GM12878 (cell line): ENCODE measurements at regions of chr2 and their contacts with region 1.

Region 1: DNA sequence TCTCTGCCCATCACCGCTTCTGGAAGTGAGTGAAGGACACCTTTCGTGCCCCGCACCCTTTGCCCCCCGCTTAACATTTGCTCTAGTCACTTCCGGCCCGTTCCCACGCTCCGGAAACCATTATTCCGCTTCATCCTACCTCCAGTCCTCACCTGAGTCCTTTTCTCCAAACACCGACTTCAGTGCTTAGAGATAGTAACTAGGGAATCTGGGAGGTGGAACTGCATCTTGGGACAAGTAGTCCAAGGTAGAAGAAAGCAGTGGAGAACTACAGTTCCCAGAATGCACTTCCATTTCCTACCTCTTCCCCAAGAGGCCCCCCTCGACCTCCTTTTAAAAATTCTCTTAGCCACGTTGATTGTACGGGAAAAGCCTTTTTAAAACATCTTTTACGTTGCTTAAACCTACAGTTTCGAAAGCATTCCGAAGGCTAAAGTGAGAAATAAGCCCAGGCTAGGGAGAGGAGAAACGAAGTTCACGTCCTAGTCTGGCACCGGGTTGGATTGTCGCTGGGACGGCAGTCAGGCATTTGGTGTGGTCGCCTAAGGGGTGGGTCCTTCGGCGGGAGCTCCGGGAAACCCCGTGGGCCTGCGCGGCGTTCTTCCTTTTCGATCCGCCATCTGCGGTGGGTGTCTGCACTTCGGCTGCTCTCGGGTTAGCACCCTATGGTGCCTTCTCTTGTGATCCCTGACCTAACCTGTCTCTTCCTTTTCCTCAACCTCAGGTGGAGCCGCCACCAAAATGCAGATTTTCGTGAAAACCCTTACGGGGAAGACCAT is at the starts of genes CLHC1 and RPS27A:
- DNase-seq: peak; percentile 85
- ATAC-seq: peak; percentile 85
- H3K4me3 ChIP-seq: peak within 1 kb of the TSS; percentile 93
- H3K27ac ChIP-seq: peak within 1 kb of the TSS; percentile 98
- H3K4me1 ChIP-seq: peaks cover 3% of the 10 kb centered on the region; the same call in 1 of the 2 replicates
- H3K27me3 ChIP-seq: no peaks in the 10 kb centered on the region
- CTCF ChIP-seq: no peak
- EP300 ChIP-seq: 0 out of 4 replicates have a peak, but pooled peaks of 1 of the 2 experiments have one; percentile 19
- POLR2A ChIP-seq: peak; percentile 98
- RAD21 ChIP-seq: no peak
- polyA plus RNA-seq, gene CLHC1: 2.6 to 3.2 TPM
- polyA plus RNA-seq, gene RPS27A: 3,416 to 4,705 TPM

Region 2: GRCh38 chr2:55282110-55282917 is 50.0 kb after region 1 on chr2:
- CTCF ChIA-PET with region 1: no interaction called
- POLR2A ChIA-PET with region 1: no interaction called
- RAD21 ChIA-PET with region 1: no interaction called
- SMC1A ChIA-PET with region 1: no interaction called
- in situ Hi-C with region 1: no loop called
- intact Hi-C with region 1: loop called (anchors 2 kb)
- DNase-seq: peak; percentile 56
- ATAC-seq: peak; percentile 99
- H3K4me3 ChIP-seq: peak overlapping the region; percentile 77
- H3K27ac ChIP-seq: peak overlapping the region; percentile 69
- H3K4me1 ChIP-seq: peaks cover 4% of the 10 kb centered on the region; the same call in 1 of the 2 replicates
- H3K27me3 ChIP-seq: no peaks in the 10 kb centered on the region
- CTCF ChIP-seq: no peak
- EP300 ChIP-seq: no peak
- POLR2A ChIP-seq: peak; percentile 98
- RAD21 ChIP-seq: no peak

Region 3: GRCh38 chr2:55530539-55531081 is 298.3 kb after region 1 on chr2:
- CTCF ChIA-PET with region 1: no interaction called
- POLR2A ChIA-PET with region 1: no interaction called
- RAD21 ChIA-PET with region 1: no interaction called
- SMC1A ChIA-PET with region 1: no interaction called
- in situ Hi-C with region 1: no loop called
- intact Hi-C with region 1: no loop called
- DNase-seq: no peak
- ATAC-seq: no peak
- H3K4me3 ChIP-seq: no peak overlapping the region
- H3K27ac ChIP-seq: no peak overlapping the region
- H3K4me1 ChIP-seq: no peaks in the 10 kb centered on the region
- H3K27me3 ChIP-seq: no peaks in the 10 kb centered on the region
- CTCF ChIP-seq: no peak
- EP300 ChIP-seq: no peak
- POLR2A ChIP-seq: no peak
- RAD21 ChIP-seq: no peak